IMR-90 (cell line): ENCODE measurements at regions of chr6 and their contacts with region 1.

Region 1: GRCh38 chr6:145214570-145214969 is 520.8 kb downstream of the EPM2A start:
- DNase-seq: peak; percentile 39
- ATAC-seq: no peak
- H3K4me3 ChIP-seq: no peak overlapping the region
- H3K27ac ChIP-seq: no peak overlapping the region
- H3K4me1 ChIP-seq: no peaks in the 10 kb centered on the region
- H3K27me3 ChIP-seq: no peaks in the 10 kb centered on the region
- CTCF ChIP-seq: peak; percentile 63
- POLR2A ChIP-seq: no peak
- RAD21 ChIP-seq: peak; percentile 72

Region 2: DNA sequence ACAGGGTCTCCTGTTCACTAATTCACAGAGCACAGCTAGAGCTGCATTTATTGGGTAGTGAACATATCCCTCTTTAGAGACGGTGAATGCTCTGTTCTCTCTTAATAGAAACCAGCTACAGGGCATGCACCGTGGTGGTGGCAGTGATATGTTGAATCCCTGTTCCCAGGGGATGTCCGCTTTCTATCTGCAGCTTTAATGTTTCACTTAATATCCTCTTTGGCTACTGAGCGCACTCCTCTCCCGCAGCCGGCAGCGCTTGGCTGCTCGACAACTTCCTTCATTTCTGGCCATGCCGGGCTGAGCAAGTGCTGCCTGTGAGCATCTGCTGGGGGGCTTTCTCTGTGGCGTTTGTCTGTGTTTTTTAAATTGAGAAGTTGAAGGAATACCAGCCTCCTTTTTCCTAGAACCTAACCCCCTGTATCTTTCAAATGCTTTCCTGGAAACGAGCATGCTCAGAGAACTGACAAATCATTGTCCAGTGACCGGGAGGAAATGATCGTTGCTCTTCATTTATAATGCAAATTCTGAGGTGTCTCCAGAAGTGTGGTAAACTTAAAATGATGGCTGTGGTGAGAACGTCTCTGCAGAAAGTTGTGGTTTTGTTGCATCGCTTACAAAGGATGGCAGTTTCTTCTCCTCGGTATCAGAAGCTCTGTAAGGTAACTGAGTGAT is 631.5 kb before region 1 on chr6:
- CTCF ChIA-PET with region 1: interaction called, 3 read pairs
- POLR2A ChIA-PET with region 1: no interaction called
- dilution Hi-C with region 1: no loop called
- in situ Hi-C with region 1: loop called (anchors 10 kb)
- intact Hi-C with region 1: loop called (anchors 1 kb)
- DNase-seq: peak; percentile 30
- ATAC-seq: peak; percentile 67
- H3K4me3 ChIP-seq: peak overlapping the region; percentile 11; the same call in 1 of the 2 replicates
- H3K27ac ChIP-seq: no peak overlapping the region
- H3K4me1 ChIP-seq: peaks cover 4% of the 10 kb centered on the region
- H3K27me3 ChIP-seq: no peaks in the 10 kb centered on the region
- CTCF ChIP-seq: no peak
- POLR2A ChIP-seq: no peak
- RAD21 ChIP-seq: no peak

Region 3: DNA sequence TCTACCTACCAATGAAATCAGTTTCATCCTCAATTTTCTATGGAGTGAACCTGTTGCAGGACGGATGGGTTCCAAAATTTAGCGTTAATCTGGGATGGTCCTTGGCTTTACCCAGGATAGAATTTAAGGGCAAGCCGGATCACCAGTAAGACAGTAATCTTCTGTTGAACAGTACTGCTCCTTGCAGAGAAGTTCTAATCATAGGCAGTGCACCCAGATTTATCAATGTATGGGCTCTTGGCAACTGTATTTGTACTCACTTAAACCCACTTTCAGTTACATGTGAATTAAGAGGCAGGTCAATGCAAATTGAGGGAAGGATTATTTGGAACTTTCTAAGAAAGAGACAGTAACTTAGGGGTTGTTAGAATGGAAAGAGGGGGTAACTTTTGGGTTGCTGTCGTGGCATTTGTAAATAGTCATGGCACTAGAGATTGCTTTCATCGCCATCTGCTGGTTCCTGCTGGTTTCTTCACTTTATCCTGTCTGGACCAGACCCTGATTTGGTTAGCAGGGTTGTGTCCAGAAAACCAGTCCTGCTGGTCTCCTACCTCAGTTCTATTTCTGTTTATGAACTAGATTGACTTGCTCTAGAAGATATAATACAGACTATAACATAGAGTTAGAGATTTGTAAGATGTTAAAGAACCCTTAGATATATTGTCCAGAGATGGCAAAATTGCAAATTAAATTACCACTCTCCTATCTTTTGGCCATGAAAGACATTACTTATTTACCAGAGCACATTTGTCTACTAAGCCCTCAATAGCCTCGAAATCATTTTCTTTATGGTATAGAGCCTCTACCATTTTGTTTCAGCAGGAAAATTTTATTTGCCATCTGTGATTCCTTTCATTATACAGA is 283.2 kb before region 1 on chr6:
- CTCF ChIA-PET with region 1: no interaction called
- POLR2A ChIA-PET with region 1: no interaction called
- dilution Hi-C with region 1: no loop called
- in situ Hi-C with region 1: no loop called
- intact Hi-C with region 1: loop called (anchors 5 kb)
- DNase-seq: peak; percentile 36
- ATAC-seq: peak; percentile 76
- H3K4me3 ChIP-seq: no peak overlapping the region
- H3K27ac ChIP-seq: no peak overlapping the region
- H3K4me1 ChIP-seq: no peaks in the 10 kb centered on the region
- H3K27me3 ChIP-seq: no peaks in the 10 kb centered on the region
- CTCF ChIP-seq: peak; percentile 66
- POLR2A ChIP-seq: no peak
- RAD21 ChIP-seq: peak; percentile 70

Region 4: DNA sequence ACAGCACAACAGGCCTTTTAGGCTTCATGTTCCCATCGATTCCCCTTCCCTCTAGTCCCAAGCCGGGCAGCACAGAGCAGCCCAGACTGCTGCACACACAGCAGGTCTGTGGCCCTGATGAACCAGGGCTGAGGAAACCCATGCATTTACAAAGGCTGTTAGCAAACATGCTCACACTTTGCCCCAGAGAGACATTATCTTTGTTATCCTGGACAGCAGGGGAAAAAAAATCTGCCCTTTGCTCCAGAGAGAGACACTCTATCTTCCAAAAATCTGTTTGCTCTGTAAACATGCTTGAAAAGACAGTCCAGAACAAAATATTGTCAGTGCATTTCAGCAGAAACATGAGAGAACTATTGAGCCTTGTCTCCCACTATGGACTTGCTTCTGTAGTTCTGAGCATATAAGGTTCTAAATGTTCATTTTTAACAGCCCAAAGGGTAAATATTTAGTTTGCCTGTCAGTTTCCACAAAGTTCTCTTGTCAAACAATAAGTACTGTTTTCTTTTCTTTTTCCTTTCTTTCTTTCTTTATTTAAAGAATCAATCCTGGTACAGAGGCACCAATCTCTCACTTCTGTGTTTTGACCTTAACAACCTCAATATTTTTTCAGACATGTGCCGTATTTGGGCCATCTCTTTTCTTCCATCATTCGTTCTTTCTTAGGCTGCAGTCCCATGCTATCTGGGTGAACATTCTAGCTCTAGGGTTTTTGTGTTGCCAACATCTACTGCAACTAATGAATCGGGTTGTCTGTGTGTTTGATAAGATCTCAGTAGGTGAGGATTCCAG is 52.7 kb after region 1 on chr6:
- CTCF ChIA-PET with region 1: no interaction called
- POLR2A ChIA-PET with region 1: no interaction called
- dilution Hi-C with region 1: no loop called
- in situ Hi-C with region 1: no loop called
- intact Hi-C with region 1: no loop called
- DNase-seq: no peak
- ATAC-seq: peak; percentile 40; the same call in 1 of the 2 replicates
- H3K4me3 ChIP-seq: no peak overlapping the region
- H3K27ac ChIP-seq: no peak overlapping the region
- H3K4me1 ChIP-seq: no peaks in the 10 kb centered on the region
- H3K27me3 ChIP-seq: no peaks in the 10 kb centered on the region
- CTCF ChIP-seq: no peak
- POLR2A ChIP-seq: no peak
- RAD21 ChIP-seq: no peak

Region 5: DNA sequence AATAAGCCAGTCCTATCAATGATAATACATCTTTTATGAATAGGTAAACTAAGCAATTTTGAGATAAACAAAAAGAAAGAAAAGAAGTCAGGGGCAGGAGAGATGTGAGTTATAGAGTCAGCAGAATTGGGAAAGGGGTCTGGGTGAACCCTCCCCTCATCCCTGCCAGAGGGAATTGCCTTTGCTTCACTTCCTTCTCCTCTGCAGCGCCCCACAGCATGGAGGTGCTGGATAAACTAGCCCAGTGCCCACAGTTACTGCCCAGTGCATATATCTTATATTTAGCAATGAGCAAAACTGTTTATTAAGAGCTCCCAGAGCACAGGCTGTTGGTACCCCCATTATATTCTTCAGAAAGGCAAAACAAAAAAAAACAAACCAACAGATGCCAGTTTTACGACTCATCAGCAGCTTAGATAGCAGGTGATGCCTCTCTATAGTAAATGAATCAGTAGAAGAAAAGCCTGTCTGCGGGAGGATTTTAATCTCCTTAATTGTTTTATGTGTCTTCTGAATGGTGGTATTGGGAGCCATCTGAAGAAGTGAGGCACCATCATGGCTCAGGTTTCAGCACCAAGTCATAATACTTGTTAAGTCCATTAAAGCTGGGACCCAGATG is 101.5 kb after region 1 on chr6:
- CTCF ChIA-PET with region 1: no interaction called
- POLR2A ChIA-PET with region 1: no interaction called
- dilution Hi-C with region 1: no loop called
- in situ Hi-C with region 1: no loop called
- intact Hi-C with region 1: no loop called
- DNase-seq: peak; percentile 4
- ATAC-seq: peak; percentile 15; the same call in 1 of the 2 replicates
- H3K4me3 ChIP-seq: no peak overlapping the region
- H3K27ac ChIP-seq: no peak overlapping the region
- H3K4me1 ChIP-seq: peaks cover 2% of the 10 kb centered on the region; the same call in 1 of the 2 replicates
- H3K27me3 ChIP-seq: no peaks in the 10 kb centered on the region
- CTCF ChIP-seq: no peak
- POLR2A ChIP-seq: no peak
- RAD21 ChIP-seq: no peak

Region 6: DNA sequence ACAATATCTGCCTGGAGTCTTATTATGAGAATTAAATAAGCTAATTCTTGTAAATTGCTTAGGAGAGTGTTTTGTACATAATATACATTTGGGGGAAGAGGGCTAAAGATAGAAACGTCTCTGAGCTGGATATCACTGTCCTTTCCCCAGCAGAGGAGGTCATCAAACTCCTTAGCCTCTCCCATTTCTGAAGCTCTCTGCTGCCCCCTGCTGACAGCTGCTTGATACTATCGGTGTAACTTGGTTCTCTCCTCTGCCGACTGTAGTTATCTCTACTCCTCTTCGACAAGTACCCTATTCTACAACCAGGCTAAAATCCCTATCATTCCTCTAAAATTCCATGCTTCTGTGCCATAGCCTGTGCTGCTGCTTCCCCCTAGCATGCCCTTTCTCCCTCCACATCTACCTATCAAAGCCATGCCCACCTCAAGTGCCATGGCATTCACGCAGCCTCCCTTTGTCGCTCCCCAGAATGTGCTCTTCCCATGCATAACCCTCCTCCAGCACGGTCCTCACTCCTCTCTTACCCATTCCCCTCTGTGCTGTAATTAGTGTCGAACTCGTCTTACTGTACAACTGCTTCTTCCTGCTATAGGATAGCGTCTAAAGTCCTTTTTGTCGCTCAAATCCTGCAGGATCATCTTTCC is 419.5 kb after region 1 on chr6:
- CTCF ChIA-PET with region 1: interaction called, 8 read pairs
- POLR2A ChIA-PET with region 1: no interaction called
- dilution Hi-C with region 1: no loop called
- in situ Hi-C with region 1: no loop called
- intact Hi-C with region 1: loop called (anchors 1 kb)
- DNase-seq: peak; percentile 76
- ATAC-seq: peak; percentile 99
- H3K4me3 ChIP-seq: no peak overlapping the region
- H3K27ac ChIP-seq: no peak overlapping the region
- H3K4me1 ChIP-seq: no peaks in the 10 kb centered on the region
- H3K27me3 ChIP-seq: no peaks in the 10 kb centered on the region
- CTCF ChIP-seq: peak; percentile 80
- POLR2A ChIP-seq: no peak
- RAD21 ChIP-seq: peak; percentile 85

Region 7: DNA sequence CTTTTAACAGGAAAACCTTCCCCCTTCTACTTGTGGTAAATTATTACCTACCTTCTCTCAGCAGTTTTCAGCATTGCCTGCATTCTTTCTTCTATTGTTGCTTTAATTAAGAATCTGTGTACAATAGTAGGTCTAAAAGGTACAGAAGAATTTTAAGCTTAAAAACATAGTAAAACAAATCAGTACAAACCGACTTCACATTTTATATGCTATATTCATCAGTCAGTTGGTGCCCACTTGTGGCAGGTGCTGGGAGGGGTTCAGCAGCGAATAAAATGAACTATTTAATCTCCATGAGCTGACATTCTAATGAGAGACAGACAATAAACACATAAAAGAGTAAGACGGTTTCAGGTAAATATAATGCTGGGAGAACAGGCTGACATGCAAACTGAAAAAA is 673.4 kb after region 1 on chr6:
- CTCF ChIA-PET with region 1: no interaction called
- POLR2A ChIA-PET with region 1: no interaction called
- dilution Hi-C with region 1: no loop called
- in situ Hi-C with region 1: no loop called
- intact Hi-C with region 1: loop called (anchors 10 kb)
- DNase-seq: peak; percentile 42
- ATAC-seq: no peak
- H3K4me3 ChIP-seq: no peak overlapping the region
- H3K27ac ChIP-seq: no peak overlapping the region
- H3K4me1 ChIP-seq: peaks cover 8% of the 10 kb centered on the region
- H3K27me3 ChIP-seq: no peaks in the 10 kb centered on the region
- CTCF ChIP-seq: peak; percentile 67
- POLR2A ChIP-seq: no peak
- RAD21 ChIP-seq: peak; percentile 67